Breast epithelium (tissue), 4 donors: ENCODE measurements at regions of chr6 and their contacts with region 1.

Region 1: GRCh38 chr6:168292826-168293225 is 26.8 kb downstream of the DACT2 start:
- DNase-seq: no peak
- H3K4me3 ChIP-seq: no peak overlapping the region
- H3K27ac ChIP-seq: no peak overlapping the region
- H3K4me1 ChIP-seq: no peaks in the 10 kb centered on the region
- H3K27me3 ChIP-seq: peaks cover 0 to 7% of the 10 kb centered on the region in 2 donors
- CTCF ChIP-seq: no peak
- POLR2A ChIP-seq: no peak

Region 2: DNA sequence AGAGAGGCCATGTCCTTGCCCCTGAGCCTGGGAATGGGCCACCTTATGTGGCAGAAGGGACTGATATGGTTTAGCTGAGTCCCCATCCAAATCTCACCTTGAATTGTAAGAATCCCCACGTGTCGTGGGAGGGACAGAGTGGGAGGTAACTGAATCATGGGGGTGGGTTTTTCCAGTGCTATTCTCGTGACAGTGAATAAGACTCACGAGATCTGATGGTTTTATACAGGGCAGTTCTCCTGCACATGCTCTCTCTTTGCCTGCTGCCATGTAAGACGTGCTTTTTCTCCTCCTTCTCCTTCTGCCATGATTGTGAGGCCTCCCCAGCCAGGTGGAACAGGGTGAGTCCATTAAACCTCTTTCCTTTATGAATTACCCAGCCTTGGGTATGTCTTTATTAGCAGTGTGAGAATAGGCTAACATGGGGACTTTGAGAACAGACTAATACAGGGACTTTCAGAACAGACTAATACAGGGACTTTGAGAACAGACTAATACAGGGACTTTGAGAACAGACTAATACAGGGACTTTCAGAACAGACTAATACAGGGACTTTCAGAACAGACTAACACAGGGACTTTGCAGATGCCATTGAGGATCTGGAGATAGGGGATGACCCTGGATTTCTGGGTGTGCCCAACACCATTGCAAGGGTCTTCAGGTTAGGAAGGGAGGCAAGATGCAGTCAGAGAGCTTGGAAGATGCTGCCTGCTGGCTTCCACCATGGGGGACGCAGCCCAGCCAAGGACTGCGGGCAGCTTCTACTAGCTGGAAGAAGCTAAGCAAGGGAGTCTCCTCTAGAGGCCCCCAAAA is 1793.3 kb before region 1 on chr6:
- intact Hi-C with region 1: loop called (anchors 10 kb)
- DNase-seq: no peak
- H3K4me3 ChIP-seq: no peak overlapping the region
- H3K27ac ChIP-seq: no peak overlapping the region
- H3K4me1 ChIP-seq: no peaks in the 10 kb centered on the region
- H3K27me3 ChIP-seq: no peaks in the 10 kb centered on the region
- CTCF ChIP-seq: no peak
- POLR2A ChIP-seq: no peak